ENCODE measurements at regions of chr6 and their contacts with region 1.

Region 1: DNA sequence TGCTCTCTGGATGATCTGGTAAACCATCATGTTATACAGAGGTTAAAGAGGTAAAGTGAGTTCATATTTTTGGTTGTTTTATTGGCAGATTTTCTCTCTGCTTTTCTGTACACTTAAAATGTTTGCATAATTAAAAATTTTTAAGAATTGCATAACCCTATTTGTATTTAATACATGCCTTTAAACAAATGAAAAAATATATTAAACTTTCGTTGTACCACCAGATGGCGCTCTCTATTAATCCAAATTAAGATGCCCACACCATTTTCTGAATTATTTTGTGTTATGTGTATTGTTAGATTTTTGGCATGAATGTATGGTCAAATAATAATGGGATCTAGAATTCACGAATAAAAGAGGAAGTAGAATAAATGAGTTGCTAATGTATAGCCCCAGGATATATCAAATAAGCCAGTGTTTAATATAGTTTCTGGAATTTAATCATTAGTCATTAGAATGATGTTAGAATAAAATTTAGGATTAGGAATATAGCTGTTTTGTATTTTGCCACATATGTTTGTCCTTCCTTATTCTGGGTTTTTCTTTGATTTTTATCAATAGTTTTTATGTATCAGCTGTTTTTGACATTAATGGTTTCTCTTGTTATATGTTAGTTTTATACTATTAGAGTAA is 38.9 kb downstream of the SMAP1 start:
- DNase-seq: peak in 2 of 35 experiments; percentile 6 to 72
- ATAC-seq: no peak
- H3K4me3 ChIP-seq: no peak overlapping the region
- H3K4me3 Mint-ChIP-seq: no peak overlapping the region
- H3K27ac ChIP-seq: no peak overlapping the region
- H3K27ac Mint-ChIP-seq: no peak overlapping the region
- H3K4me1 ChIP-seq: no peaks in the 10 kb centered on the region
- H3K4me1 Mint-ChIP-seq: peaks cover 64 to 71% (median 65%) of the 10 kb centered on the region in 3 donors
- H3K27me3 ChIP-seq: no peaks in the 10 kb centered on the region
- H3K27me3 Mint-ChIP-seq: no peaks in the 10 kb centered on the region

Region 2: DNA sequence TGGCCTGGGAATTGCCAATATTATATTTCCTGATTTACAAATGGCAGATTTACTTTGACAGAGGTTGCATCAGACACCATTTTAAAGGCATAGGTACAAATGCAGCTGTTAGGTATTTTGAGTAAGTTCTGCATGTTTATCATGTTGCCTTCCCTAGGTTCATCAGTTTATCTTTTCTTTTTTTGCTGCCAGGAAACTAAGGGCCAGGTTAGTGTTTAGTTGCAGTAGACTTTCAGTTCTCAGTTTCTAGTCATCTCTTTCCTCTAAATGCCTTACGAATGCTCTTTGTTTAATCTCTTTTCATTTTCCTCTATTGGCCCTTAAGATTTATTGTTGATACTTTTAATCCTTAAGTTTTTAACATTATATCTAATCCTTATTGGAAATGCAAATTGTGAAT is 91.0 kb after region 1 on chr6:
- CTCF ChIA-PET with region 1: no interaction called
- POLR2A ChIA-PET with region 1: no interaction called
- DNase-seq: no peak
- ATAC-seq: no peak
- H3K4me3 ChIP-seq: no peak overlapping the region
- H3K4me3 Mint-ChIP-seq: no peak overlapping the region
- H3K27ac ChIP-seq: no peak overlapping the region
- H3K27ac Mint-ChIP-seq: no peak overlapping the region
- H3K4me1 ChIP-seq: no peaks in the 10 kb centered on the region
- H3K4me1 Mint-ChIP-seq: peaks cover 36 to 51% (median 42%) of the 10 kb centered on the region in 3 donors
- H3K27me3 ChIP-seq: no peaks in the 10 kb centered on the region
- H3K27me3 Mint-ChIP-seq: no peaks in the 10 kb centered on the region

Region 3: GRCh38 chr6:70811788-70812187 is 105.2 kb after region 1 on chr6:
- CTCF ChIA-PET with region 1: no interaction called
- POLR2A ChIA-PET with region 1: no interaction called
- DNase-seq: no peak
- ATAC-seq: no peak
- H3K4me3 ChIP-seq: no peak overlapping the region
- H3K4me3 Mint-ChIP-seq: no peak overlapping the region
- H3K27ac ChIP-seq: no peak overlapping the region
- H3K27ac Mint-ChIP-seq: no peak overlapping the region
- H3K4me1 ChIP-seq: no peaks in the 10 kb centered on the region
- H3K4me1 Mint-ChIP-seq: peaks cover 4 to 6% (median 5%) of the 10 kb centered on the region in 3 donors
- H3K27me3 ChIP-seq: no peaks in the 10 kb centered on the region
- H3K27me3 Mint-ChIP-seq: no peaks in the 10 kb centered on the region

Region 4: GRCh38 chr6:70884074-70884983 is 177.7 kb after region 1 on chr6:
- CTCF ChIA-PET with region 1: interaction called, 31 to 46 read pairs
- POLR2A ChIA-PET with region 1: no interaction called
- DNase-seq: peak in 33 of 35 experiments; percentile 10 to 73 (median 36)
- ATAC-seq: peak; percentile 71 to 76 (median 74)
- H3K4me3 ChIP-seq: no peak overlapping the region
- H3K4me3 Mint-ChIP-seq: no peak overlapping the region
- H3K27ac ChIP-seq: no peak overlapping the region
- H3K27ac Mint-ChIP-seq: no peak overlapping the region
- H3K4me1 ChIP-seq: peaks cover 0 to 2% of the 10 kb centered on the region in 2 experiments
- H3K4me1 Mint-ChIP-seq: no peaks in the 10 kb centered on the region
- H3K27me3 ChIP-seq: peaks cover 0 to 15% of the 10 kb centered on the region in 2 experiments
- H3K27me3 Mint-ChIP-seq: peaks cover 22 to 28% of the 10 kb centered on the region in 2 donors

Region 5: DNA sequence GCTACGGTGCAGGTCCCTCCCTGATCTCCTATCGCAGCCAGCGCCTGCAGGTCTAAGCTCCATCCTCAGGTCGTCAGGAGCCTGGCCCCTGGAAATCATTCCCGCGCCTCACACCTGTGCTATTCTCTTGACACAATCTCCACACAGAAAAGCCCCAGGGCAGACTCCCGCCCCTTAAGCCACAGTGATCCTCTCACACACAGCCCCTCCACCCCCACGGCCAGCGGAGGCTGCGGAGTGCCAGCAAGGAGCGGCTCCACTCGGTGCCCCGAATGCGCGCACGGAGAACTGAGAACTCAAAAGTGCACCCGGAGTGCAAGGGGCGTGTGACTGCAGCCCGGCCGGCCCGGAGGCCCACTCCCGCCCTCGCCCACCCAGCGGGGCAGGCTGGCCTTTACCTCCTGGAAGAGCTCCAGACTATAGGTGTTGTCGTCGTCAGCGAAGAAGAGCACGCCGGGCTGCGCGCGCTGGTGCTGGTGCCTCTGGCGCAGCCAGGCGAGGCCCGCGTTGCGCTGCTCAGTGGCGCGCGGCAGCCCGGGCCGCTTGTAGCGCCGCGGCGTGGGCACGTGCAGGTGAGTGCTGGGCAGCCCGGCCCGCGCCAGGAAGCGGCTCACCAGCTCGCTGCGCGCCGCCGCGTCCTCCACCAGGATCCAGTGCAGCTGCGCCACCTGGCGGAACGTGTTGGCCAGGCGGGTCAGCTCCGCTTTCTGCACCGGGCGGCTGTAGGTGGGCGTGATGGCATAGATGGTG is 249.0 kb after region 1 on chr6:
- CTCF ChIA-PET with region 1: interaction called, 6 to 22 read pairs
- POLR2A ChIA-PET with region 1: no interaction called
- DNase-seq: peak; percentile 58 to 88 (median 78)
- ATAC-seq: peak; percentile 89 to 96 (median 93)
- H3K4me3 ChIP-seq: peak overlapping the region; percentile 47 to 75
- H3K4me3 Mint-ChIP-seq: peak overlapping the region; percentile 73 to 82 (median 74)
- H3K27ac ChIP-seq: no peak overlapping the region
- H3K27ac Mint-ChIP-seq: no peak overlapping the region
- H3K4me1 ChIP-seq: peaks cover 2 to 24% of the 10 kb centered on the region in 2 experiments
- H3K4me1 Mint-ChIP-seq: peaks cover 5 to 26% (median 19%) of the 10 kb centered on the region in 3 donors
- H3K27me3 ChIP-seq: peaks cover 24 to 34% of the 10 kb centered on the region in 2 experiments
- H3K27me3 Mint-ChIP-seq: peaks cover 50 to 58% of the 10 kb centered on the region in 2 donors